H1 (cell line): ENCODE measurements at regions of chr1 and their contacts with region 1.

Region 1: GRCh38 chr1:153352523-153352922 is 3.9 kb upstream of the PGLYRP4 start:
- DNase-seq: peak in 1 of 2 experiments; percentile 65
- H3K4me3 ChIP-seq: no peak overlapping the region
- H3K27ac ChIP-seq: no peak overlapping the region
- H3K4me1 ChIP-seq: no peaks in the 10 kb centered on the region; a peak in 1 of 7 replicates
- H3K27me3 ChIP-seq: no peaks in the 10 kb centered on the region
- CTCF ChIP-seq: peak; percentile 84 to 85 (median 84)
- EP300 ChIP-seq: no peak
- POLR2A ChIP-seq: no peak
- RAD21 ChIP-seq: peak; percentile 91 to 92

Region 2: DNA sequence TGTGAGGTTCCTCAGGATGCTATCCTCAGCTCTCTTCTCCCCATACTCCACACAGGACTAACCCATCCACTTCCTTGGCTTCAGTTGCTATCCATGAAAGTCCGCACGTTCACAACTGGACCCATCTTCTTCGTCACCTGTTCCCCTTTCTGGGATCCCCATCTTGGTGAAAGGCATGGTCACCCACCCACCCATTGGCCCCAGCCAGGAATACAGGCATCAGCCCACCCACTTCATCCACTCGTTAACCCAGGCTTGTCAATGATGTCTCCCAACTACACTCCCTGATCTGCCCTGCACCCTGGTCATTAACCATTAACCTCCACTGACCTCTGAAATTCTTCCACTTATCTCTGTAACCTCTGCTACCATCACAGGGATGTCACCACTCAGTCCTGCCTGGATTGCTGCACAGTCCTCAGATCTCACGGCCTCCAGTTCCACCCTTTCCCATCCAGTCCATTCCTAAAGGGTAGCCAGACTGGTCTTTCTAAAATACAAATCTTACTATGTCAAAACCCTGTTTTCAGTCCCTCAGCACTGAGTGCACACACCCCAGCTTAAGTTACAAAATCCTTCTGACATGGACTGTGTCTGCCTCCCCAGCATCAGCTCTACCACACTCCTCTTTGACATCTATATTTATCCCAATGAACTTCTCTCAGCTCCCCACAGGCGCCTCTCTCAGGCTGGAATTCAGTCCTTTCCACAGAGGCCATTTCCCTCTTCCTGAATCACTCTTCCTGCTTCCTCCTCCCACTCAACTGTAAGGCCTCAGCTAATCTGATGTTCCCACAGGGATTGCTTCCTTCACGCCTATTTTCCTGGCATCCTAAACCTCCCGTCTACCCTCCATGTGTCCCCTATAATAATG is 14.3 kb before region 1 on chr1:
- CTCF ChIA-PET with region 1: interaction called, 12 read pairs
- POLR2A ChIA-PET with region 1: no interaction called
- DNase-seq: no peak
- H3K4me3 ChIP-seq: no peak overlapping the region
- H3K27ac ChIP-seq: no peak overlapping the region
- H3K4me1 ChIP-seq: no peaks in the 10 kb centered on the region
- H3K27me3 ChIP-seq: peaks cover 0 to 2% (median 0%) of the 10 kb centered on the region in 4 experiments; a peak in 1 of 7 replicates
- CTCF ChIP-seq: no peak
- EP300 ChIP-seq: no peak
- POLR2A ChIP-seq: no peak
- RAD21 ChIP-seq: no peak

Region 3: GRCh38 chr1:153390938-153391710 is 38.6 kb after region 1 on chr1 and contains the start of gene S100A8:
- CTCF ChIA-PET with region 1: interaction called, 63 read pairs
- POLR2A ChIA-PET with region 1: no interaction called
- DNase-seq: no peak
- H3K4me3 ChIP-seq: no peak within 1 kb of the TSS
- H3K27ac ChIP-seq: no peak within 1 kb of the TSS
- H3K4me1 ChIP-seq: no peaks in the 10 kb centered on the region
- H3K27me3 ChIP-seq: peaks cover 0 to 2% (median 0%) of the 10 kb centered on the region in 4 experiments; a peak in 1 of 7 replicates
- CTCF ChIP-seq: no peak
- EP300 ChIP-seq: no peak
- POLR2A ChIP-seq: no peak
- RAD21 ChIP-seq: no peak
- total RNA-seq, gene S100A8: not detected in 2 replicates

Region 4: GRCh38 chr1:153465811-153466636 is 113.5 kb after region 1 on chr1:
- CTCF ChIA-PET with region 1: interaction called, 22 read pairs
- POLR2A ChIA-PET with region 1: no interaction called
- DNase-seq: peak; percentile 43 to 92
- H3K4me3 ChIP-seq: peak overlapping the region in 1 of 4 experiments; percentile 35; a peak in 1 of 8 replicates
- H3K27ac ChIP-seq: 0 out of 2 replicates have a peak overlapping the region, but pooled peaks have one; percentile 33
- H3K4me1 ChIP-seq: peaks cover 4 to 8% (median 5%) of the 10 kb centered on the region in 4 experiments; a peak in 5 of 7 replicates
- H3K27me3 ChIP-seq: no peaks in the 10 kb centered on the region; a peak in 1 of 7 replicates
- CTCF ChIP-seq: peak; percentile 78 to 89 (median 83)
- EP300 ChIP-seq: no peak
- POLR2A ChIP-seq: peak in 1 of 2 experiments; percentile 43; a peak in 1 of 3 replicates
- RAD21 ChIP-seq: peak; percentile 61 to 67

Region 5: GRCh38 chr1:153510984-153511410 is 158.5 kb after region 1 on chr1:
- CTCF ChIA-PET with region 1: interaction called, 19 read pairs
- POLR2A ChIA-PET with region 1: no interaction called
- DNase-seq: peak in 1 of 2 experiments; percentile 93
- H3K4me3 ChIP-seq: no peak overlapping the region
- H3K27ac ChIP-seq: no peak overlapping the region
- H3K4me1 ChIP-seq: peaks cover 0 to 3% (median 1%) of the 10 kb centered on the region in 4 experiments; a peak in 3 of 7 replicates
- H3K27me3 ChIP-seq: peaks cover 0 to 5% (median 2%) of the 10 kb centered on the region in 4 experiments; a peak in 3 of 7 replicates
- CTCF ChIP-seq: peak; percentile 95 to 97 (median 95)
- EP300 ChIP-seq: no peak
- POLR2A ChIP-seq: no peak
- RAD21 ChIP-seq: peak; percentile 99 to 100